ENCODE measurements at regions of chr7 and their contacts with region 1.

Region 1: DNA sequence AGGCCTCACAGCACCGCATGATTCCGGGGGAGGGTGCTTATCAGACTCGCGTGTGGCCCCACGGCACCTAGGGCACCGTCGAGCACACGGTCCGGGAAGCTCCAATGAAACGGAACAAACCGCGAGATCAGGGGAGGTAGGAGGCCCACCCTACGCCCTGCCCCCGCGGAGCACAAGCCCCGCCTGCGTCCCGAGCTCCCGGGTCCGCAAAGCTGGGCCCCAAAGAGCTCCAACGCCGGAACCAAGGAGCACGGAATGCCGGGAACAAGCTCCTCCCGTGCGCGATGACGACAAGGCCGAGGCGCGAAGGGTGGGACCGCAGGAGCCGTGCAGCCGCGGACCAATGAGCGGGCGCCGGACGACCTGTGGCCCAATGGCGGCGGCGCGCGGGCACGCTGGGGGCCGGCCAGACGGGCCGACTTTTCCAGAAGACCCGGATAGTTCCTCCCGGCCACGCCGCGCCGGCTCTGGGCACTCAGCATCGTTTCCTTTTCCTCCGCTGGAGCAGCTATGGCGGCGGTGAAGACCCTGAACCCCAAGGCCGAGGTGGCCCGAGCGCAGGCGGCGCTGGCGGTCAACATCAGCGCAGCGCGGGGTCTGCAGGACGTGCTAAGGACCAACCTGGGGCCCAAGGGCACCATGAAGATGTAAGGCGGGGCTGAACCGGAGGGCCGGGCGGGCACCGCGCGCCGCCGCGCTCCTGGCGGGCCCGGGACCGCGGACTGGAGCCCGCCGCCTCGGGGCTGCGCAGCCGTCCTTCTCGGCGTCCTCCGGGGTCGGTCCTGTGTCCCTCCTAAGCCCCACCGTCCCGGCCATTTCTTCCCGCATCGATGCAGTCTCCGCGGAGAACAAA is at the starts of genes CCT6A and PSPH:
- DNase-seq: peak; percentile 87 to 99
- H3K4me3 ChIP-seq: peak within 1 kb of the TSS; percentile 94
- H3K27ac ChIP-seq: peak within 1 kb of the TSS; percentile 92 to 95
- H3K4me1 ChIP-seq: peaks cover 0 to 26% of the 10 kb centered on the region in 2 donors
- H3K27me3 ChIP-seq: no peaks in the 10 kb centered on the region
- CTCF ChIP-seq: no peak
- total RNA-seq, gene CCT6A: 86.2 TPM
- total RNA-seq, gene PSPH: not detected

Region 2: DNA sequence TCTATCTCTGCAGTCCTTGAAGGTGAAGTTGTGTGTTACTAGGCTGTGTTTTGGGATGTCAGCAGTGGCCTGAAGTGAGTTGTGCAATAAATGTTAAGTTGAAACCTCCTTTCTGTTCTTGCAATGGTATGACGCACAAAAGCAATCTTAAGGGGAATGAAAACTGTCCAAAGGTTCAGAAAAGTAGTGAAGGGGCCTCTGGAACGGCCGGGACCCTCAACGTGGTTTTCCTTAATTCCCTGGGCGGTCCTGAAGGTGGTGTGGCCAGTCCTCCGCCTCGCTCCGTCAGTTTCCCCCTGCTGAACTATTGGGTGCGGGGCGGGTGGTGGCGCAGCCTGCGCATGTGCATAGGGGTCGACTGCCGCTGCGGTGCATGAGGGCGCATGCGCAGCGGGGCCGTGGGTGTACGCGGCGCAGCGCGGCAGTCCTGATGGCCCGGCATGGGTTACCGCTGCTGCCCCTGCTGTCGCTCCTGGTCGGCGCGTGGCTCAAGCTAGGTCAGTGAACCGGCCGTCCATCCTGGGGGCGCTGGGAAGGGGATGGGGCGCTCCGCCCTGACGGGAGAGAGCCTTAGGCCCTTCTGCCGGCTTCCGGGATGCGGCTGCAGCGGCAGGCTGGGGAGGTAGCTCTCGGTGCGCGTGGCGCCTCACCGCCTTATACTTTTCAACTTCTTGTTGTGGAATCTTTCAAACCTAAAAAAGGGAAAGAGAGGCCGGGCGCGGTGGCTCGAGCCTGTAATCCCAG is 12.5 kb after region 1 on chr7 and contains the start of gene SUMF2:
- intact Hi-C with region 1: loop called (anchors 1 kb)
- DNase-seq: peak; percentile 67 to 95
- H3K4me3 ChIP-seq: peak within 1 kb of the TSS; percentile 80 to 98
- H3K27ac ChIP-seq: peak within 1 kb of the TSS; percentile 93
- H3K4me1 ChIP-seq: peaks cover 0 to 7% of the 10 kb centered on the region in 2 donors
- H3K27me3 ChIP-seq: no peaks in the 10 kb centered on the region
- CTCF ChIP-seq: peak in 1 of 3 experiments; percentile 33
- total RNA-seq, gene SUMF2: 74.6 TPM